K562 (cell line): ENCODE measurements at regions of chr19 and their contacts with region 1.

Region 1: DNA sequence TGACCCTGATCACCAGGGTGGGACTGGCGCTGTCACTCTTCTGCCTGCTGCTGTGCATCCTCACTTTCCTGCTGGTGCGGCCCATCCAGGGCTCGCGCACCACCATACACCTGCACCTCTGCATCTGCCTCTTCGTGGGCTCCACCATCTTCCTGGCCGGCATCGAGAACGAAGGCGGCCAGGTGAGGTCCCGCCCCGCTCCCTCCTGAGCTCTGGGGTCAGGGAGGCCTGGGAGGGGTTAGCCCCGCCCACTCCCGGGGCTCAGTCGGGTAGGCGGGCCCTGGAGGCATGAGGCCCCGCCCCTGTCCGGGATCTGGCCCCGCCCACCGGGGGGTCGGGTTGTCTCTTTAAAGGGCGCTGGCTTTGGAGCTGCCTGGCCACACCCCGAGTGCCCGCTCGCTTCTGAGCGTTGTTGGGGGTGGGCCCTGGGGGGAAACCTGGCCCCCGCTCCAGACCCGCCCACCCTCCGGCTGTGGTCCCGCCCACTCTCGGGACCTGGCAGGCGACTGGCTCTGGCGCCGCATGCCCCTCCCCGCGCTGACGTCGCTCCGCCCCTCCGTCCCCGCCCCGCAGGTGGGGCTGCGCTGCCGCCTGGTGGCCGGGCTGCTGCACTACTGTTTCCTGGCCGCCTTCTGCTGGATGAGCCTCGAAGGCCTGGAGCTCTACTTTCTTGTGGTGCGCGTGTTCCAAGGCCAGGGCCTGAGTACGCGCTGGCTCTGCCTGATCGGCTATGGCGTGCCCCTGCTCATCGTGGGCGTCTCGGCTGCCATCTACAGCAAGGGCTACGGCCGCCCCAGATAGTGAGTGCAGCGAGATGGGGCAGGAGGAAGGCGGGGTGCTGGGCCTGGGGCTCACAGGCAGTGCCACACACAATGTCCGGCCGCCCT is 13.1 kb downstream of the DDX39A start:
- DNase-seq: peak; percentile 96 to 100 (median 100)
- ATAC-seq: peak; percentile 93
- H3K4me3 ChIP-seq: peak overlapping the region; percentile 25
- H3K27ac ChIP-seq: 0 out of 3 replicates have a peak overlapping the region, but pooled peaks have one; percentile 25
- H3K4me1 ChIP-seq: peaks cover 7 to 60% of the 10 kb centered on the region in 2 experiments; a peak in 4 of 5 replicates
- H3K27me3 ChIP-seq: no peaks in the 10 kb centered on the region
- CTCF ChIP-seq: peak; percentile 60 to 96 (median 93)
- EP300 ChIP-seq: no peak
- POLR2A ChIP-seq: peak; percentile 44
- RAD21 ChIP-seq: peak; percentile 87 to 93

Region 2: GRCh38 chr19:14147797-14148605 is 258.0 kb before region 1 on chr19:
- CTCF ChIA-PET with region 1: no interaction called
- POLR2A ChIA-PET with region 1: interaction called, 3 read pairs
- in situ Hi-C with region 1: no loop called
- intact Hi-C with region 1: loop called (anchors 10 kb)
- DNase-seq: peak; percentile 76 to 83 (median 81)
- ATAC-seq: peak; percentile 95
- H3K4me3 ChIP-seq: no peak overlapping the region
- H3K27ac ChIP-seq: no peak overlapping the region
- H3K4me1 ChIP-seq: peaks cover 12 to 34% of the 10 kb centered on the region in 2 experiments; a peak in 4 of 5 replicates
- H3K27me3 ChIP-seq: no peaks in the 10 kb centered on the region
- CTCF ChIP-seq: peak; percentile 84 to 93 (median 90)
- EP300 ChIP-seq: no peak
- POLR2A ChIP-seq: no peak; the same call in 1 of the 2 replicates
- RAD21 ChIP-seq: peak; percentile 58 to 81

Region 3: DNA sequence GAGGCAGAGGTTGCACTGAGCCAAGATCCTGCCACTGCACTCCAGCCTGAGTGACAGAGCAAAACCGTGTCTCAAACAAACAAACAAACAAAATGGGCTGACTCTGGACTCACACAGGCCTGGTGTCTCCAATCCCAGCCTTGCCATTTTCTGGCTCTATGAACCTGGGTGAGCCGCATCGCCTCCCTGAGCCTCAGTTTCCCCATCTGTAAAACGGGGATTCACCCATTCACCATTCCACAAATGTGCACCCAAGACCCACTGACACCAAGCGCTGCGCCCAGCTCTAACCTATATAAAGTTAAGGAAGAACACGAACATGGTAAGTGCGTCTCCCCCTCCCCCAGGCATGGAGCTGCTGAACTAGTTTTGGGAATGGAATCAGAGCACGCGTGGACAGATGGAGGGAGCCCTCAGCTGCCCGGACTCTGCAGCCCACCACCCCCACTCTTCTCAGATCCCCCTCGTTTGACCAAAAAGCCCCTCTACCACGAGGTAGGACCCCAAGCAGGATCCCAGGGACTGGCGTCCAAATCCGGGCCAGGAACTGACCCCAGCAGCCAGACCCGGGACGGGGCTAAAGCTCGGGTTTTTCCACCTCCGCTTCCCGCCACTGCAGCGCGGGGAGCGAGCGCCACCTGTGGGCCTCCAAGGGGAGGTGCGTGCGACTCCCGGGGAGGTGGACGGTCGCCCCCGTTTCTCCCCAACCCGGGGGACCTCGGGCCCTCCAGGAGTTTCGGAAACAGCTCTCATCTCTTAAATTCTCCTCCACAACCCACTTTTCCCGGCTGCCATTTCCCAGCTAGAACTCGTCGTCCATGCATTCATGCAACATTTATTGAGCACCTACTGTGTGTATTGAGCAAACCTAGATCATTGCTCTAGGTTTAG is 57.8 kb before region 1 on chr19:
- CTCF ChIA-PET with region 1: interaction called, 3 read pairs
- POLR2A ChIA-PET with region 1: interaction called, 4 read pairs
- in situ Hi-C with region 1: no loop called
- intact Hi-C with region 1: loop called (anchors 1 kb)
- DNase-seq: peak; percentile 80 to 91 (median 89)
- ATAC-seq: peak; percentile 92
- H3K4me3 ChIP-seq: peak overlapping the region; percentile 35
- H3K27ac ChIP-seq: no peak overlapping the region; the same call in 2 of the 3 replicates
- H3K4me1 ChIP-seq: peaks cover 3 to 14% of the 10 kb centered on the region in 2 experiments; a peak in 3 of 5 replicates
- H3K27me3 ChIP-seq: peaks cover 0 to 13% of the 10 kb centered on the region in 2 experiments; a peak in 2 of 5 replicates
- CTCF ChIP-seq: peak; percentile 93 to 96 (median 93)
- EP300 ChIP-seq: no peak
- POLR2A ChIP-seq: no peak
- RAD21 ChIP-seq: peak; percentile 93 to 96

Region 4: DNA sequence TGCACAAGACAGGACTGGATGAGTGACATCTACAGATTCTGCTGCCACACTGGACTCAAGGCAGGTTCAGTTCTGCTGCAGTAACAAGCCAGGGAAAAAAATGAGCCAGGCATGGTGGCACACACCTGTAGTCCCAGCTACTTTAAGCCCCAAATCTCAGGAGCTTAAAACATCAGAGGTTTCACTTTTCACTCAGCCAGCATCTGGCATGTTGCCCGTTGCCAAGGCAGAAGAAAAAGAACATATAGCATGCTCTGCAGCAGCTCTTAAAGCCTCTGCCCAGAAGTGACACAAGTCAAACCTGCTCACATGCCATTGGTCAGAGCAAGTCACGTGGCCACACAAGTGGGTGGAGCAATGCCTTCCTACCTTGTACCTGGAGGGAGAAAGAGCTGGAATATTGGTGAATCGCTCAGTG is 39.5 kb before region 1 on chr19:
- CTCF ChIA-PET with region 1: interaction called, 3 read pairs
- POLR2A ChIA-PET with region 1: interaction called, 3 read pairs
- in situ Hi-C with region 1: no loop called
- intact Hi-C with region 1: loop called (anchors 1 kb)
- DNase-seq: peak; percentile 77 to 88 (median 84)
- ATAC-seq: peak; percentile 69
- H3K4me3 ChIP-seq: no peak overlapping the region
- H3K27ac ChIP-seq: 0 out of 3 replicates have a peak overlapping the region, but pooled peaks have one; percentile 39
- H3K4me1 ChIP-seq: peaks cover 44 to 53% of the 10 kb centered on the region in 2 experiments
- H3K27me3 ChIP-seq: no peaks in the 10 kb centered on the region
- CTCF ChIP-seq: no peak
- EP300 ChIP-seq: no peak
- POLR2A ChIP-seq: no peak
- RAD21 ChIP-seq: no peak

Region 5: DNA sequence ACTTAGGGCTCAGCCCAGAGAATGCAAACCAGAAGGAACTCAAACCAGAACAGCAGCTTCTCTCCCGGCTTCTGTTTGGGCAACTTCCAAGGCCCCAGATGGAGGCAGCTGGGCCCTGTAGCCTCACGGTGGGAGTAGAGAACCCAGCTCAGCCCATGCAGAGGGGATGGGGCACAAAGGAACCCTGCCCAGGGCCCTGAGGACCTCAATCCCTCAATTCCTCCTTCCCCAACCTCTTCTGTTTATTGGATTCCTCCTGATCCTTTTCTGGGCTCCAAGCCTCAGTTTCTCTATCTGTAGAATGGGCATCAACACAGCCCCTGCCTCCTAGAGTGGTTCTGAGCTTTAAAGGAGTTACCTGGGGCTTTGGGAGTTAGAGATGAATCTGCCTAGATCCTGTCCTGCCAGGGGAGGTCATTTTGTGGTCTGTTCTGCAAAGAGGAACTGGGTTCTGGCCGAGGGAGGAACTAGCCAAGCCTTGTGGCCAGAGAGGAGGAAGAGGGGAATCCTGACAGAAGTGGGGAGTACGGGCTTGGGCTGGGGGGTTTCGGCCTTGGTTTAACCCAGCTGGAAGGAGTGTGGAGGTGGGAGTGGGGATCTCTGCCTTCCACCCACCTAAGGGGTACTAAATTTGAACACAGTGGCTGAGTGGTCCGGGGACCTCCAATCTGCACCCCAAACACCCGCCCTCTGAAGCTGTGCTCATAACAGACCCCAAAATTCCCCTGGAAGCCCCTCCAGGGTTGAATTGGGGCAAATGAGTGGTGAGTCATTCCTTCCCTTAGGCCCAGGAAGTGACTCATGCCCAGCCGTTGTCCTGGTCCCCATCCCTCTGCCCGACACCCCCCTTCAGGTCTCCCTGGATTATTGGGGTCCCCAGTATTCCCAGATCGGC is 22.1 kb before region 1 on chr19:
- CTCF ChIA-PET with region 1: no interaction called
- POLR2A ChIA-PET with region 1: interaction called, 24 read pairs
- in situ Hi-C with region 1: no loop called
- intact Hi-C with region 1: no loop called
- DNase-seq: peak; percentile 63 to 80 (median 68)
- ATAC-seq: peak; percentile 48
- H3K4me3 ChIP-seq: peak overlapping the region; percentile 64
- H3K27ac ChIP-seq: peak overlapping the region; percentile 91
- H3K4me1 ChIP-seq: peaks cover 26 to 54% of the 10 kb centered on the region in 2 experiments
- H3K27me3 ChIP-seq: no peaks in the 10 kb centered on the region
- CTCF ChIP-seq: no peak
- EP300 ChIP-seq: peak; percentile 75; the same call in 1 of the 2 replicates
- POLR2A ChIP-seq: no peak
- RAD21 ChIP-seq: no peak

Region 6: DNA sequence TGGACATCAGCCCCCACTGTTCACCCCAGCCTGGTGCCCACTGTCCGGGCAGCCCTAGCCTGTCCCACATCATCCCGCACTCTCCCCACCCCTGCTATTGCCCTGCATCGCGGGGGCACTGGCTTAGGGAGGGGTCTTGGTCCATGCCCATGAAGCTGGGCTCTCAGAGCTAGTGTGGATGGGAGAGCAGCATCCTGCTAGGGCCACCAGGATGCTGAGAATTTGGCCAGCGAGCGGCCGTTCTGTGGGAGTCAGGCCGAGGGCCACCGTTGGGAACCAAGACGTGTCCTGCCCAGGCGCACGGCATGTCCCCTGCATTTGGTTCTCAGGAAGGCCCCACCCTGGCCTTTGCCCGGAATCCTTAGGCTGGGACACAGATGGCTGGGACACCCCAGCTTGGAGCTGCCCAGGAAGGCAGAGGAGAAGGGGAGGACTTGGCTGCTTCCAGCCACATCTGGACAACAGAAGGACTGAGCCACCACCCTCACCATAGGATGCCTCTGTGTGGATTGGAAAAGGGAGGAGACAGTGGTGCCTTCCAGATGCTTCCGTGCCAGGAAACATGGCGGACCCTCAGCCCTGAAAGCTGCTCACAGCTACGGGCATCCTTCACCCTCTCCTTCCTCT is 10.2 kb before region 1 on chr19:
- CTCF ChIA-PET with region 1: interaction called, 3 read pairs
- POLR2A ChIA-PET with region 1: interaction called, 24 read pairs
- in situ Hi-C with region 1: no loop called
- intact Hi-C with region 1: no loop called
- DNase-seq: peak in 1 of 4 experiments; percentile 5
- ATAC-seq: peak; percentile 28
- H3K4me3 ChIP-seq: no peak overlapping the region
- H3K27ac ChIP-seq: no peak overlapping the region
- H3K4me1 ChIP-seq: peaks cover 0 to 6% of the 10 kb centered on the region in 2 experiments; a peak in 3 of 5 replicates
- H3K27me3 ChIP-seq: no peaks in the 10 kb centered on the region
- CTCF ChIP-seq: no peak
- EP300 ChIP-seq: no peak
- POLR2A ChIP-seq: 0 out of 2 replicates have a peak, but pooled peaks have one; percentile 33
- RAD21 ChIP-seq: no peak

Region 7: GRCh38 chr19:14419106-14419813 is 13.3 kb after region 1 on chr19 and contains the start of gene DDX39A:
- CTCF ChIA-PET with region 1: no interaction called
- POLR2A ChIA-PET with region 1: interaction called, 55 read pairs
- in situ Hi-C with region 1: no loop called
- intact Hi-C with region 1: no loop called
- DNase-seq: peak; percentile 94 to 100 (median 96)
- ATAC-seq: peak; percentile 96
- H3K4me3 ChIP-seq: peak within 1 kb of the TSS; percentile 96
- H3K27ac ChIP-seq: peak within 1 kb of the TSS; percentile 98
- H3K4me1 ChIP-seq: peaks cover 25 to 30% of the 10 kb centered on the region in 2 experiments
- H3K27me3 ChIP-seq: no peaks in the 10 kb centered on the region
- CTCF ChIP-seq: 0 out of 6 replicates have a peak, but pooled peaks of 1 of the 3 experiments have one; percentile 1
- EP300 ChIP-seq: peak; percentile 58
- POLR2A ChIP-seq: peak; percentile 96
- RAD21 ChIP-seq: no peak
- polyA plus RNA-seq, gene DDX39A: 188 to 230 TPM

Region 8: GRCh38 chr19:14441041-14441938 is 35.3 kb after region 1 on chr19:
- CTCF ChIA-PET with region 1: no interaction called
- POLR2A ChIA-PET with region 1: no interaction called
- in situ Hi-C with region 1: no loop called
- intact Hi-C with region 1: no loop called
- DNase-seq: no peak
- ATAC-seq: no peak
- H3K4me3 ChIP-seq: peak overlapping the region; percentile 43; the same call in 1 of the 2 replicates
- H3K27ac ChIP-seq: peak overlapping the region; percentile 63; the same call in 1 of the 3 replicates
- H3K4me1 ChIP-seq: peaks cover 11 to 32% of the 10 kb centered on the region in 2 experiments
- H3K27me3 ChIP-seq: no peaks in the 10 kb centered on the region
- CTCF ChIP-seq: no peak
- EP300 ChIP-seq: no peak
- POLR2A ChIP-seq: no peak
- RAD21 ChIP-seq: no peak

Region 9: DNA sequence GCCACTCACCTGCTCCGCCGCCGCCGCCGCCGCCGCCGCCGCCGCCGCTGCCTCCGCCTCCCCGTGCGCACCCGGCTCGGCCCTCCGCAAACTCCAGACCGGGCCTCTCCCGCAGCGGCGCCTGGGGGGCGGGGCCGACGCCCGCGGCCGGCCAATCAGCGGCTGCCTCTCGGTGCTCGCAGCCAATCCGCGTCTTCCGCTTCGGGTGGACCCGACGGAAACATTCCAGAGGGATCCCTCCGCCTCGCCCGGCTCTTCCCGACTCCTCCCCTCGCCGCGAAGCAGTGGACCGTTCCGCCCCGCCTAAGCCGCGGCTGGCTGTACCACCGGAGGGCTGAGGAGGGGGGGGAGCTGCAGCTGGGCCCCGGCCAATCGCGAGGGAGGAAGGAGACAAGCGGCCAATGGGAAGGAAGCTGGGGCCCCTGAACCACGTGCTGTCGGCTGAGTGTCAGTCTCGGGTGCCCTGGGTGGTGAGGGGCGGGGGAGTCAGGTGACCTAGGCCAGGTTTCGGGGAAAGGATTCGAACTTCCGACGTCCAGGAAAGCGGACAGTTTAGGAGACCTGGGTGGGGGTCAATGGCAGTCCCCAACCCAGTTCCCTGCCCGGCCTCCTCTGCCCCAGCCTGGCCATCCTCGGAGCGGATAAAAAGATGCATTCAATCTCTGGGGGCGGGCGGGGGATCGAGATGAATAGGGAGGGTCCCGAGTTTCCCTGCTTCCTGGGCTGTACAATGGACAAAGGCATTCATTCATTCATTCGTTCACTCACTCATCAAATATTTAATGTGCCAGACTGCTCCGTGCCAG is 90.2 kb after region 1 on chr19 and contains the start of gene GIPC1:
- CTCF ChIA-PET with region 1: no interaction called
- POLR2A ChIA-PET with region 1: no interaction called
- in situ Hi-C with region 1: no loop called
- intact Hi-C with region 1: no loop called
- DNase-seq: peak; percentile 97 to 100 (median 100)
- ATAC-seq: peak; percentile 97
- H3K4me3 ChIP-seq: peak within 1 kb of the TSS; percentile 68
- H3K27ac ChIP-seq: peak within 1 kb of the TSS; percentile 59
- H3K4me1 ChIP-seq: peaks cover 16 to 29% of the 10 kb centered on the region in 2 experiments; a peak in 4 of 5 replicates
- H3K27me3 ChIP-seq: no peaks in the 10 kb centered on the region
- CTCF ChIP-seq: no peak
- EP300 ChIP-seq: no peak
- POLR2A ChIP-seq: no peak
- RAD21 ChIP-seq: no peak
- polyA plus RNA-seq, gene GIPC1: 0.49 to 1.1 TPM